ENCODE measurements at regions of chr10 and their contacts with region 1.

Region 1: GRCh38 chr10:100878291-100878910 is 34.4 kb upstream of the SLF2 start:
- DNase-seq: peak; percentile 75
- ATAC-seq: peak; percentile 86
- H3K4me3 Mint-ChIP-seq: no peak overlapping the region
- H3K27ac Mint-ChIP-seq: no peak overlapping the region
- H3K4me1 Mint-ChIP-seq: peaks cover 31% of the 10 kb centered on the region
- H3K27me3 Mint-ChIP-seq: peaks cover 28% of the 10 kb centered on the region
- CTCF ChIP-seq: peak; percentile 30

Region 2: DNA sequence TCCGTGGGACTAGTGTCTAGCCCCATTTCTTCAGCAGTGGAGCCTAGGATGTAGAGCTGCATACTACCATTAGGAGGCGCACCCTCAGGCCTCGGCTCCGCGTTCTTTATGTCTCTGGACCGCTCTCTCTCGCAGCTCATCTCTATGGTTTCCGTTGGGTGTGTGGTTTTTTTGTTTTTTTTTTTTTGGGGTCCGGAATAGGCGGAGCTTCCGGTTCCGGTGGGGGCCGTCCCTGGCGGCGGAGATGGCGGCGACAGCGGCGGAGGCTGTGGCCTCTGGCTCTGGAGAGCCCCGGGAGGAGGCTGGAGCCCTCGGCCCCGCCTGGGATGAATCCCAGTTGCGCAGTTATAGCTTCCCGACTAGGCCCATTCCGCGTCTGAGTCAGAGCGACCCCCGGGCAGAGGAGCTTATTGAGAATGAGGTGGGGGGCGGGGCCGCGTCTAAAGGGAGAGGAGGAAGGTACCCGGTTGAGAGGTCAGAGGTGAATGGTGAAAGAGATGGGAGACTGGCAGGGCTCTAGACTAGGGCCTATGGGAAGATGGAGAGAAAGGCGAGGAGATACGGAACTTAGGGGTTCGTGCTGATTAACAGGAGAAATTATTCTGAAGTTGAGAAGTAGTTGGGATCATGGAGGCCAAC is 342.6 kb before region 1 on chr10 and contains the start of gene HIF1AN:
- CTCF ChIA-PET with region 1: interaction called, 23 read pairs
- POLR2A ChIA-PET with region 1: no interaction called
- DNase-seq: peak; percentile 86
- ATAC-seq: peak; percentile 98
- H3K4me3 Mint-ChIP-seq: no peak within 1 kb of the TSS
- H3K27ac Mint-ChIP-seq: peak within 1 kb of the TSS; percentile 73
- H3K4me1 Mint-ChIP-seq: peaks cover 7% of the 10 kb centered on the region; the same call in 1 of the 2 replicates
- H3K27me3 Mint-ChIP-seq: no peaks in the 10 kb centered on the region
- CTCF ChIP-seq: peak; percentile 69
- total RNA-seq, gene HIF1AN: 49.9 to 58.3 TPM (median 53.9 TPM) in 3 replicates

Region 3: GRCh38 chr10:100637785-100638184 is 240.6 kb before region 1 on chr10:
- CTCF ChIA-PET with region 1: interaction called, 12 read pairs
- POLR2A ChIA-PET with region 1: no interaction called
- DNase-seq: peak; percentile 87
- ATAC-seq: peak; percentile 88
- H3K4me3 Mint-ChIP-seq: peak overlapping the region; percentile 29
- H3K27ac Mint-ChIP-seq: no peak overlapping the region
- H3K4me1 Mint-ChIP-seq: peaks cover 35% of the 10 kb centered on the region
- H3K27me3 Mint-ChIP-seq: peaks cover 14% of the 10 kb centered on the region
- CTCF ChIP-seq: peak; percentile 76

Region 4: DNA sequence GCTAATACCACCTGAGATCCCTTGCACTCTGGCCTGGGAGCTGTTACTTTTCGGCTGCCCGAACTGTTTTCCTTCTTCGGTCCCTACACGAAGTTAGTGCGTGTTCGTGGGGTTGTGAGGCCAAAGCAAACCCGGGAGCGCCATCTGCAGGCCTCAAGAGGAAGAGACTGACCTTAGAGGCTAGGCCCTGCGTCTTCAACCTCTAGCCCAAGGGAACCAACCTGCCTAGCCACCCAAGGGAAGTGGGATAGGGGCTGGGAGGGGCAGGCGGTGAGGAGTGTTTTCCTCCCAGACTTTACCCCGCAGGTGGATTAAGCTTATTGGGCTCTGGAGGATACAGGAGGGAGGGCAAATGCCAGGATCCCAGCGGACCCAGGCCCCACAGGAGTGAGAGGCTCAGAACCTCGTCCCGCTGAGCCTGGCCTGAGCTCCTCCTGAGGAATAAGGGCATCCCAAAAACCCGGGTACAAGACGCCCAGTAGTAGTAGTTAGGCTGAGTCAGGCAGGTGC is 134.7 kb before region 1 on chr10:
- CTCF ChIA-PET with region 1: interaction called, 167 read pairs
- POLR2A ChIA-PET with region 1: interaction called, 3 read pairs
- DNase-seq: peak; percentile 57
- ATAC-seq: peak; percentile 3; the same call in 1 of the 2 replicates
- H3K4me3 Mint-ChIP-seq: peak overlapping the region; percentile 52
- H3K27ac Mint-ChIP-seq: no peak overlapping the region
- H3K4me1 Mint-ChIP-seq: peaks cover 65% of the 10 kb centered on the region
- H3K27me3 Mint-ChIP-seq: peaks cover 96% of the 10 kb centered on the region
- CTCF ChIP-seq: peak; percentile 58; the same call in 1 of the 2 replicates

Region 5: GRCh38 chr10:100788002-100788900 is 90.2 kb before region 1 on chr10:
- CTCF ChIA-PET with region 1: interaction called, 11 read pairs
- POLR2A ChIA-PET with region 1: no interaction called
- DNase-seq: peak; percentile 38
- ATAC-seq: peak; percentile 61
- H3K4me3 Mint-ChIP-seq: no peak overlapping the region
- H3K27ac Mint-ChIP-seq: peak overlapping the region; percentile 42
- H3K4me1 Mint-ChIP-seq: peaks cover 38% of the 10 kb centered on the region
- H3K27me3 Mint-ChIP-seq: peaks cover 11% of the 10 kb centered on the region
- CTCF ChIP-seq: no peak

Region 6: GRCh38 chr10:100826031-100826651 is 52.3 kb before region 1 on chr10:
- CTCF ChIA-PET with region 1: interaction called, 22 read pairs
- POLR2A ChIA-PET with region 1: no interaction called
- DNase-seq: no peak
- ATAC-seq: no peak
- H3K4me3 Mint-ChIP-seq: peak overlapping the region; percentile 12; the same call in 1 of the 2 replicates
- H3K27ac Mint-ChIP-seq: no peak overlapping the region
- H3K4me1 Mint-ChIP-seq: peaks cover 33% of the 10 kb centered on the region
- H3K27me3 Mint-ChIP-seq: no peaks in the 10 kb centered on the region; the same call in 1 of the 2 replicates
- CTCF ChIP-seq: no peak

Region 7: GRCh38 chr10:100864978-100865377 is 13.4 kb before region 1 on chr10:
- CTCF ChIA-PET with region 1: interaction called, 34 read pairs
- POLR2A ChIA-PET with region 1: no interaction called
- DNase-seq: no peak
- ATAC-seq: no peak
- H3K4me3 Mint-ChIP-seq: no peak overlapping the region
- H3K27ac Mint-ChIP-seq: no peak overlapping the region
- H3K4me1 Mint-ChIP-seq: peaks cover 12% of the 10 kb centered on the region
- H3K27me3 Mint-ChIP-seq: peaks cover 69% of the 10 kb centered on the region
- CTCF ChIP-seq: no peak

Region 8: GRCh38 chr10:101297901-101298486 is 419.6 kb after region 1 on chr10:
- CTCF ChIA-PET with region 1: no interaction called
- POLR2A ChIA-PET with region 1: no interaction called
- DNase-seq: peak; percentile 92
- ATAC-seq: peak; percentile 81
- H3K4me3 Mint-ChIP-seq: no peak overlapping the region
- H3K27ac Mint-ChIP-seq: no peak overlapping the region
- H3K4me1 Mint-ChIP-seq: peaks cover 10% of the 10 kb centered on the region
- H3K27me3 Mint-ChIP-seq: peaks cover 69% of the 10 kb centered on the region
- CTCF ChIP-seq: peak; percentile 86